ENCODE measurements at regions of chr7 and their contacts with region 1.

Region 1: GRCh38 chr7:45052011-45052410 is 36.8 kb downstream of the NACAD start:
- DNase-seq: no peak
- ATAC-seq: no peak
- H3K4me3 Mint-ChIP-seq: no peak overlapping the region
- H3K27ac Mint-ChIP-seq: peak overlapping the region; percentile 14
- H3K4me1 Mint-ChIP-seq: peaks cover 59% of the 10 kb centered on the region
- H3K27me3 Mint-ChIP-seq: no peaks in the 10 kb centered on the region
- CTCF ChIP-seq: no peak

Region 2: DNA sequence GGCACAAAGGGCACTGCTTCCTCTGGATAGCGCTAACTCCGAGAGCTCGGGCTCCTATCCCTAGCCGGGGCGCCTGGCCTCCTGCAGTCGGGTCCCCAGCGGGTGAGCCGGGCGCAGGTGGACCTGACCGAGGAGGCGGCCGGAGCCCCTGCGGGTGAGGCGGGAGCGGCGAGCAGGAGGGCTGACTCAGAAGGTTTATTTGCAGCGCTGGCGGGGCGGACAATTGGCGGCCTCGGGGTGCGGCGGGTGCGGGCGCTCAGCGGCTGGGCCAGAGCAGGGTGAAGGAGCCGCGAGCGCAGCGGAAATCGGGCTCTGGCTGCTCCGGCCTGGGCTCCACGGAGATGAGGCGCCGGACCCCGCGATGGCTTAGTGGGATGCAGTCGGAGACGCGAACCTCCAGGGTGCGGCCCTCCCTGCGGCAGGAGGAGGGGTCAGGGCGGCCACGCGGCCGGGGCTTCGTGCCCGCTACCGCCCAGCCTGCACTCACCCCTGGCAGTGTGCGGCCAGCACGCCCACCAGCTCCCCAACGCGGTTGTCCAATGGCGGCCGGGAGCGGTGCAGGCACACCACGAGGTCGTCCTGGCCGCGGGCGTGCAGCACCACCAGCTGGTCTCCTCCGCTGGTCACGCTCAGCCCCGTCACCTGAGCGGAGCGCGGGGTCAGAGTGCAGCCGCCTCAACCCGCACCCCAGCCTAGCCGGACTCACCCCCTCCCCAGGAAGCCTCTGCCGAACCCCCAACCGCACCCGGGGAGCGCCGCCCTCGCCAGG is 89.3 kb before region 1 on chr7:
- CTCF ChIA-PET with region 1: no interaction called
- POLR2A ChIA-PET with region 1: interaction called, 11 read pairs
- intact Hi-C with region 1: no loop called
- DNase-seq: no peak
- ATAC-seq: no peak
- H3K4me3 Mint-ChIP-seq: no peak overlapping the region
- H3K27ac Mint-ChIP-seq: no peak overlapping the region
- H3K4me1 Mint-ChIP-seq: peaks cover 23% of the 10 kb centered on the region
- H3K27me3 Mint-ChIP-seq: no peaks in the 10 kb centered on the region
- CTCF ChIP-seq: no peak